ENCODE measurements at regions of chr2 and their contacts with region 1.

Region 1: GRCh38 chr2:98465456-98466226 is 21.0 kb downstream of the INPP4A start:
- DNase-seq: peak; percentile 62 to 94 (median 89)
- ATAC-seq: peak; percentile 71
- H3K4me3 ChIP-seq: peak overlapping the region; percentile 40
- H3K4me3 Mint-ChIP-seq: peak overlapping the region; percentile 89
- H3K27ac ChIP-seq: peak overlapping the region; percentile 79 to 87
- H3K27ac Mint-ChIP-seq: peak overlapping the region; percentile 95
- H3K4me1 ChIP-seq: peaks cover 95% of the 10 kb centered on the region
- H3K4me1 Mint-ChIP-seq: peaks cover 90% of the 10 kb centered on the region
- H3K27me3 ChIP-seq: no peaks in the 10 kb centered on the region
- H3K27me3 Mint-ChIP-seq: no peaks in the 10 kb centered on the region
- CTCF ChIP-seq: no peak

Region 2: GRCh38 chr2:98157557-98157956 is 308.1 kb before region 1 on chr2:
- CTCF ChIA-PET with region 1: no interaction called
- POLR2A ChIA-PET with region 1: no interaction called
- intact Hi-C with region 1: no loop called
- DNase-seq: no peak
- ATAC-seq: no peak
- H3K4me3 ChIP-seq: no peak overlapping the region
- H3K4me3 Mint-ChIP-seq: no peak overlapping the region
- H3K27ac ChIP-seq: no peak overlapping the region
- H3K27ac Mint-ChIP-seq: no peak overlapping the region
- H3K4me1 ChIP-seq: no peaks in the 10 kb centered on the region
- H3K4me1 Mint-ChIP-seq: no peaks in the 10 kb centered on the region
- H3K27me3 ChIP-seq: peaks cover 0 to 3% of the 10 kb centered on the region in 2 experiments
- H3K27me3 Mint-ChIP-seq: peaks cover 37% of the 10 kb centered on the region
- CTCF ChIP-seq: no peak

Region 3: DNA sequence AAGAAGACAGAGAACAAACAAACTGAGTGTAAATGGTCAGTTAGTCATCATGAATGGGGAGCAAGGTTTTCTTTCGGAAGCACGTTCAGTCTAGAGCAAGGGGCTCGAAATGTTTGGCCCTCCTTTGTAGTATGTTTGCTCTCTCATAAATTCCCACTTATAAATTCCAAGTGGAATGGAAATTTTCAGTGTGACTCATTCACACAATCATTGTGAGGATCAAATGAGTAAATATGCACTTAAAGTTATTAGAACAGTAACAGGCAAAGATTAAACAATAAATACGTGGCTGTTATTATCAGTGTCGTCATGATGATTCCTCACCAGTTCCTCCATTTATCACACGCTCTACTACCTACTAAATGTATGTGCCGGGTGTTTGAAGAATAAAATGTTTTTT is 108.9 kb before region 1 on chr2:
- CTCF ChIA-PET with region 1: no interaction called
- POLR2A ChIA-PET with region 1: no interaction called
- intact Hi-C with region 1: no loop called
- DNase-seq: no peak
- ATAC-seq: no peak
- H3K4me3 ChIP-seq: no peak overlapping the region
- H3K4me3 Mint-ChIP-seq: no peak overlapping the region
- H3K27ac ChIP-seq: no peak overlapping the region
- H3K27ac Mint-ChIP-seq: no peak overlapping the region
- H3K4me1 ChIP-seq: no peaks in the 10 kb centered on the region
- H3K4me1 Mint-ChIP-seq: no peaks in the 10 kb centered on the region
- H3K27me3 ChIP-seq: peaks cover 0 to 4% of the 10 kb centered on the region in 2 experiments
- H3K27me3 Mint-ChIP-seq: peaks cover 43% of the 10 kb centered on the region
- CTCF ChIP-seq: no peak

Region 4: GRCh38 chr2:98419977-98420725 is 45.5 kb before region 1 on chr2:
- CTCF ChIA-PET with region 1: no interaction called
- POLR2A ChIA-PET with region 1: no interaction called
- intact Hi-C with region 1: no loop called
- DNase-seq: no peak
- ATAC-seq: no peak
- H3K4me3 ChIP-seq: no peak overlapping the region
- H3K4me3 Mint-ChIP-seq: no peak overlapping the region
- H3K27ac ChIP-seq: no peak overlapping the region
- H3K27ac Mint-ChIP-seq: no peak overlapping the region
- H3K4me1 ChIP-seq: peaks cover 4% of the 10 kb centered on the region
- H3K4me1 Mint-ChIP-seq: no peaks in the 10 kb centered on the region
- H3K27me3 ChIP-seq: no peaks in the 10 kb centered on the region
- H3K27me3 Mint-ChIP-seq: no peaks in the 10 kb centered on the region
- CTCF ChIP-seq: no peak

Region 5: DNA sequence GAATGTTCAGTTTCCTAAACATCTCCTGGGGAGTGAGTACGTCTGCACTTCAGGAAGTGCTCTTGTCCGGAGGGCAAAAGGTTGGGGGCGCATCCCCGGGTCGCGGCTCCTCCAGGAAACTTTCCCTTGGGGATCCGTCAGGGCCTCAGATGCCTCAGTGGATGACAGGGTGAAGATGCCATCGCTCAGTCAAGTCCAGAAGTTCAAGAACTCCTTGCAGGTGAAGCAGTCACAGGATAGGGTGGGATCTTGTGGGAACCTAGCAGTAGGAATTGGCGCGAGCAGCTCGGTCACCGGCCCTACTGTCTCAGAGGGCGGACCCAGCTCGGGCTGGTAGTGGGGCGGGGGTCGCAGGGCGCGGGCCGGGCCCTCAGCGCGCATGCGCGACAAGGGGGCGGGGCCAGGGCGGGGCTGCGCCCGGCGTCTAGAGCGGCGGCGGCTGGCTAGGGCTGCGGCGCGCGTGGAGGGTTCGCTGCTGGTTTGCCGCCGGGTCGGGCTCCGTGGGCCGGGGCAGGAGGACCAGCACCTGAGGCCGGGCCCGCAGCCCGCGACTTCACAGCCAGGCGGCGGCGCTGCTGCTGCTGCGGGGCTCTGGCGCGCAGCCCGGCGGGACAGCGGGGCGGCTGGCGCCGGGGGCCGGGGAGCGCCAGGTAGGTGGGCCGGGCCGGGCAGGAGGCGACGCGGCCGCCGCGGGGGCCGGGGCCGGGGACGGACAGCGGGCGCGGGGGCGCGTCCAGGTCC is 21.0 kb before region 1 on chr2 and contains the start of gene INPP4A:
- CTCF ChIA-PET with region 1: interaction called, 4 read pairs
- POLR2A ChIA-PET with region 1: interaction called, 213 read pairs
- intact Hi-C with region 1: loop called in 1 of 2 experiments (anchors 1 kb)
- DNase-seq: peak; percentile 67 to 93 (median 77)
- ATAC-seq: peak; percentile 64
- H3K4me3 ChIP-seq: peak within 1 kb of the TSS; percentile 94
- H3K4me3 Mint-ChIP-seq: peak within 1 kb of the TSS; percentile 96
- H3K27ac ChIP-seq: peak within 1 kb of the TSS; percentile 53 to 72
- H3K27ac Mint-ChIP-seq: peak within 1 kb of the TSS; percentile 90
- H3K4me1 ChIP-seq: peaks cover 25% of the 10 kb centered on the region
- H3K4me1 Mint-ChIP-seq: peaks cover 52% of the 10 kb centered on the region
- H3K27me3 ChIP-seq: no peaks in the 10 kb centered on the region
- H3K27me3 Mint-ChIP-seq: no peaks in the 10 kb centered on the region
- CTCF ChIP-seq: no peak
- total RNA-seq, gene INPP4A: 86.4 to 89.2 TPM

Region 6: DNA sequence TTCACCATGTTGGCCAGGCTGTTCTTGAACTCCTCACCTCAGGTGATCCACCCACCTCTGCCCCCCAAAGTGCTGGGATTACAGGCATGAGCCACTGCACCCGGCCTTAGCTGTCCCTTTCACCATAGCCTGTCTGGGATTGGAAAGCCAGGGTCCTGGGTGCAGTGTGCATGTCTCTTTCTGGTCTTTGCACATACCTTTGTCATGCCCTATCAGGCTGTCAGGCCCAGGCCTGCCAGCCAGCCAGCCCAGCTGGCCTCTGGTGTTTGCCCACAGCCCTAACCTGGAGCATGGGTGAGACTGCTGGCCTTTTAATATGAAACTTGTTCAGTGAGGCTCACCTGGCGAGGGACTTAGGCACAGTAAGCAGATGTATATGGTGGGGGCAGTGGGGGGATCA is 14.7 kb before region 1 on chr2:
- CTCF ChIA-PET with region 1: interaction called, 4 read pairs
- POLR2A ChIA-PET with region 1: interaction called, 213 read pairs
- intact Hi-C with region 1: loop called (anchors 1 to 2 kb)
- DNase-seq: no peak
- ATAC-seq: no peak
- H3K4me3 ChIP-seq: no peak overlapping the region
- H3K4me3 Mint-ChIP-seq: no peak overlapping the region
- H3K27ac ChIP-seq: no peak overlapping the region
- H3K27ac Mint-ChIP-seq: peak overlapping the region; percentile 90
- H3K4me1 ChIP-seq: peaks cover 81% of the 10 kb centered on the region
- H3K4me1 Mint-ChIP-seq: peaks cover 100% of the 10 kb centered on the region
- H3K27me3 ChIP-seq: no peaks in the 10 kb centered on the region
- H3K27me3 Mint-ChIP-seq: no peaks in the 10 kb centered on the region
- CTCF ChIP-seq: no peak

Region 7: DNA sequence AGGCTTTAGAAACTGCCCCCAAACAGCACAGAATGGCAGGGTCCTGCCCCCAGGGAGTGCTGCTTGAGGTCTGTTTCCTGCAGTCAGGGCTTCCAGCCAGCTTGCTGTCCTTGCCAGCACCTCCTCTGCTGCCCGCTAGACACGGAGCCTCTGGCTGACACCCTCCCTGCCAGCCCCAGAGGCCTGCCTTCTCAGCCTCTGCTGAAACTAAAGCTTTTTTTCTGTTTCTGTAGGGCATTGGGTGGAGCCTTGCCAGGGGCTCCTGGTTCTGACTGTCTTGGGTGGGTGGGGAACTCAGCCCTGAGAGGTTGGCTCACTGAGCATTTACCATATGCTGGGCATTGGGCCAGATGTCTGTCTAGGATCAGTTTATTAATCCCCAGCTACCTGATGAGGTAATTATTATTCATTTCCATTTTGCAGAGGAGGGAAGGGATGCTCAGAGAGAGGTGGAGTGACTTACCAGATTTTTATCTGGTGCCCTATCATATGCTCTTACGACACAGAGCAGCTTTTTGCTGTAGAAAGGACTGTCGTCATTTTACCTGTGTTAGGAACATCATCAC is 14.4 kb after region 1 on chr2:
- CTCF ChIA-PET with region 1: interaction called, 10 read pairs
- POLR2A ChIA-PET with region 1: interaction called, 53 read pairs
- intact Hi-C with region 1: loop called in 1 of 2 experiments (anchors 2 kb)
- DNase-seq: peak in 9 of 14 experiments; percentile 36 to 63 (median 47)
- ATAC-seq: peak; percentile 68
- H3K4me3 ChIP-seq: no peak overlapping the region
- H3K4me3 Mint-ChIP-seq: peak overlapping the region; percentile 62
- H3K27ac ChIP-seq: peak overlapping the region; percentile 58 to 69
- H3K27ac Mint-ChIP-seq: peak overlapping the region; percentile 72
- H3K4me1 ChIP-seq: peaks cover 97% of the 10 kb centered on the region
- H3K4me1 Mint-ChIP-seq: peaks cover 100% of the 10 kb centered on the region
- H3K27me3 ChIP-seq: no peaks in the 10 kb centered on the region
- H3K27me3 Mint-ChIP-seq: no peaks in the 10 kb centered on the region
- CTCF ChIP-seq: no peak

Region 8: DNA sequence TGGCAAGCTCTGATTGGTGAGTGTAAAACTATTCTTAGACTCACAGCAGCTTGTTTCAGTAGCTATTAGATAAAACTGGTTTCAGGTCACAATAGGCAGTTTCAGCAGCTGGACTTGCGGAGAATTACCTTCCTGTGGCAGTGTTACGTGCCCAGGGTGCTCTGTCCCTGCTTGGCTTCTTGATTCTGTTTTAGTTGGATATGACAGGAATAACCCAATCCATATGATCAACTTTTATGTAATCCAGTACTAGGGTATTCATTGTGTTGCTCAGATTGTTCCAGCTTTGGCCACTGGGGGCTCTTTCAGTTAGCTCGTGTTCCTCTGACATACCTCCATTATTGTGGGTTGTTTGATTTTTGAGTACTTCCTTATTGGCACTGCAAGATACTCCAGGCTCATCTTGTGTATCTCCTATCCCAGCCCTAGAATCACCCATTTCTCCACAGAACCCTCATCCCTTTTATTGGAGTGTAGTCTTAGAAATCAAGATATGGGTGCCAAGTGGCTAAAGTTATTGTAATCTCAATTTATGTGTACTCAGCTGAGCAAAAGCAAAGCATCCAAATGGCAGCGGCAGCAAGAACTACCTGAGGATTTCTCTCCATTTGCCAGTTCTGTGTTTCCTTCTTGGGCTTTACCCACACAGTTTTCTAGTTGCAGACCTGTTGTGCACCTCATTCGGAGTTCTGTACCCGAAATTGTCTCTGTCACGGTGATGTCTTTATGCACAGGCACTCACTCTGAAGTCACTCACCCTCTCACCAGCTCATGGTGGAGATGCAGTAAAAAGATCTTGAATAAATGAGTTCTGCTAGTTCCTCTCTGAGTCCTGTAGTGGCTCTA is 22.4 kb after region 1 on chr2:
- CTCF ChIA-PET with region 1: interaction called, 27 read pairs
- POLR2A ChIA-PET with region 1: interaction called, 20 read pairs
- intact Hi-C with region 1: loop called in 1 of 2 experiments (anchors 2 kb)
- DNase-seq: peak in 12 of 14 experiments; percentile 37 to 80 (median 50)
- ATAC-seq: peak; percentile 86
- H3K4me3 ChIP-seq: no peak overlapping the region
- H3K4me3 Mint-ChIP-seq: peak overlapping the region; percentile 54
- H3K27ac ChIP-seq: no peak overlapping the region
- H3K27ac Mint-ChIP-seq: peak overlapping the region; percentile 57
- H3K4me1 ChIP-seq: peaks cover 79% of the 10 kb centered on the region
- H3K4me1 Mint-ChIP-seq: peaks cover 100% of the 10 kb centered on the region
- H3K27me3 ChIP-seq: no peaks in the 10 kb centered on the region
- H3K27me3 Mint-ChIP-seq: no peaks in the 10 kb centered on the region
- CTCF ChIP-seq: peak; percentile 66

Region 9: GRCh38 chr2:98508709-98509066 is 43.0 kb after region 1 on chr2:
- CTCF ChIA-PET with region 1: no interaction called
- POLR2A ChIA-PET with region 1: interaction called, 5 read pairs
- intact Hi-C with region 1: loop called in 1 of 2 experiments (anchors 1 kb)
- DNase-seq: peak in 12 of 14 experiments; percentile 16 to 80 (median 44)
- ATAC-seq: peak; percentile 88
- H3K4me3 ChIP-seq: no peak overlapping the region
- H3K4me3 Mint-ChIP-seq: peak overlapping the region; percentile 49
- H3K27ac ChIP-seq: no peak overlapping the region
- H3K27ac Mint-ChIP-seq: peak overlapping the region; percentile 83
- H3K4me1 ChIP-seq: peaks cover 84% of the 10 kb centered on the region
- H3K4me1 Mint-ChIP-seq: peaks cover 93% of the 10 kb centered on the region
- H3K27me3 ChIP-seq: no peaks in the 10 kb centered on the region
- H3K27me3 Mint-ChIP-seq: no peaks in the 10 kb centered on the region
- CTCF ChIP-seq: no peak